A673 (cell line): ENCODE measurements at regions of chr6 and their contacts with region 1.

Region 1: DNA sequence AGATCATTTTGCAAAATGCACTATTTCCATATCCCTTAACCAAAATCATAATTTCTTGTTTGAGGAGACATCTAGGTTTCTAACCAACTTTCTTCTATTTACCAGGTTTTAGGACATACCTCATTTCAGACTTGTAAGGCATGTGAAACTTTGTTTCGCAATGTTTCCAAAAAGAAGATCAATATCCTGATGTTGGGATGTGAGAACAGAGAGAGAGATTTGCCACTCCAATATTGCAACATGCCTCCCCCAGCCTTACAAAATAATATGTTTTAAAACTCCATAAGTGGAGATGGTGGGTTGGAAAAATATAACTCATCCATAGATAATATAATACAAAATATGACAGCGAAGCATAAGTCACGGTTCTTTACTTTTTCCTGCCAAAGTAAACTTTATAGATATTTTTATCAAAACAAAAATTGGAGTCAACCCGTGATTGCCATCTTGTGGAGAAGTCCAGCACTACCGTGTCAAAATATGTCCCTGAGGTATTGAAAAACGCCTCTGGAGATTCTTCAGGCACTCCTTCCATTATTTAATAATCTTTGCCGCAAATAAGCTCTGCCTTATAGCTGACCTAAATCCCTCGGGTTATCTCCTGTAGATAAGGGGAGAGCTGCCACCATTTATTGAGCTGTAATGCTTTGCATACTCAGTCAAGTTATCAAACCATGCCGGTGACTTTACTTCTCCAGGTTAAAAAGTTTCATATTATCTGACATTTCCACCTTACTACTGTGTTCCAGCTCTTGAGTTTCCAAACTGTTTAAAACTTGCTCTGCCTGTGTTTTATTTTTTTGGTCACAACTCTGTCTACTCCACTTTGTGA is 534.2 kb downstream of the HACE1 start:
- DNase-seq: peak; percentile 69
- H3K4me3 ChIP-seq: no peak overlapping the region
- H3K27ac ChIP-seq: no peak overlapping the region
- H3K4me1 ChIP-seq: peaks cover 17% of the 10 kb centered on the region
- H3K27me3 ChIP-seq: no peaks in the 10 kb centered on the region
- CTCF ChIP-seq: peak; percentile 84

Region 2: DNA sequence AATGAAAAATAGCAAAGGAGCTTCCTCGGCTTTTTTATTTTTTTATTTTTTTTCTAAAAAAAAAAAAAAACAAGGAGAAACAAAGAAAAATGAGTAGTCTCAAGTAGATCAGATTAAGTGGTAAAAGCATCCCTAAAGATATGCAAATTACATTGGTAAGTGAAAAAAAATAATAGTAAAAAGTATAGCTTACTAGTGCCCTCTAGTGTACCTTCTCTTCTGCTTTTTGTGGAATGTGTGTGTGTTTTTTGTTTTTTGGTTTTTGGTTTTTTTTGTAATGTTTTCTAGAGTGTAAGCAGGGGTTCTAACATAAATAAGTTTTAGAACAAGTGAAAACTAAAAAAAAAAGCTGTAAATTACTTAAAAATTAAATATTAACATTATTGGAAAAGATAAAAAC is 527.8 kb before region 1 on chr6:
- CTCF ChIA-PET with region 1: interaction called, 6 read pairs
- POLR2A ChIA-PET with region 1: no interaction called
- intact Hi-C with region 1: loop called (anchors 5 kb)
- DNase-seq: peak; percentile 69
- H3K4me3 ChIP-seq: no peak overlapping the region
- H3K27ac ChIP-seq: no peak overlapping the region
- H3K4me1 ChIP-seq: no peaks in the 10 kb centered on the region
- H3K27me3 ChIP-seq: no peaks in the 10 kb centered on the region
- CTCF ChIP-seq: peak; percentile 73

Region 3: DNA sequence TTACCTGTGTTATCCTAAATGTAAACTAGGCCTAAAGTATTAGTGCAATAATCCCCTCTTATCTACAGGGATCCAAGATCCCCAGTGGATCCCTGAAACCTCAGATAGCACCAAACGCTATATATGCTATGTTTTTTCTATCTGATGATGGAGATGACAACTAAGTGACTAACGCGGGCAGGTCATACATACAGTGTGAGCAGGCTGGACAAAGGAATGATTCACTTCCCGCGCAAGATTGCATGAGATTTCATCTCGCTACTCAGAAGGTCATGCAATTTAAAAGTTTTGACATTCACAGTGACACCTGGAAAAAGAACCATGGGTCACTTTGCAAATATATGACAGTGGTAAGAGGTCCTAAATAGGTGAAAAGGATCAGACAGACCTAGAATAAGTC is 341.7 kb before region 1 on chr6:
- CTCF ChIA-PET with region 1: no interaction called
- POLR2A ChIA-PET with region 1: no interaction called
- intact Hi-C with region 1: loop called (anchors 10 kb)
- DNase-seq: no peak
- H3K4me3 ChIP-seq: no peak overlapping the region
- H3K27ac ChIP-seq: no peak overlapping the region
- H3K4me1 ChIP-seq: peaks cover 20% of the 10 kb centered on the region
- H3K27me3 ChIP-seq: no peaks in the 10 kb centered on the region
- CTCF ChIP-seq: no peak

Region 4: GRCh38 chr6:104344223-104344622 is 18.7 kb after region 1 on chr6:
- CTCF ChIA-PET with region 1: no interaction called
- POLR2A ChIA-PET with region 1: no interaction called
- intact Hi-C with region 1: no loop called
- DNase-seq: no peak
- H3K4me3 ChIP-seq: no peak overlapping the region
- H3K27ac ChIP-seq: no peak overlapping the region
- H3K4me1 ChIP-seq: no peaks in the 10 kb centered on the region
- H3K27me3 ChIP-seq: no peaks in the 10 kb centered on the region
- CTCF ChIP-seq: no peak

Region 5: GRCh38 chr6:104483225-104483834 is 157.8 kb after region 1 on chr6:
- CTCF ChIA-PET with region 1: no interaction called
- POLR2A ChIA-PET with region 1: no interaction called
- intact Hi-C with region 1: loop called (anchors 10 kb)
- DNase-seq: peak; percentile 51
- H3K4me3 ChIP-seq: no peak overlapping the region
- H3K27ac ChIP-seq: no peak overlapping the region
- H3K4me1 ChIP-seq: peaks cover 16% of the 10 kb centered on the region
- H3K27me3 ChIP-seq: no peaks in the 10 kb centered on the region
- CTCF ChIP-seq: peak; percentile 70

Region 6: DNA sequence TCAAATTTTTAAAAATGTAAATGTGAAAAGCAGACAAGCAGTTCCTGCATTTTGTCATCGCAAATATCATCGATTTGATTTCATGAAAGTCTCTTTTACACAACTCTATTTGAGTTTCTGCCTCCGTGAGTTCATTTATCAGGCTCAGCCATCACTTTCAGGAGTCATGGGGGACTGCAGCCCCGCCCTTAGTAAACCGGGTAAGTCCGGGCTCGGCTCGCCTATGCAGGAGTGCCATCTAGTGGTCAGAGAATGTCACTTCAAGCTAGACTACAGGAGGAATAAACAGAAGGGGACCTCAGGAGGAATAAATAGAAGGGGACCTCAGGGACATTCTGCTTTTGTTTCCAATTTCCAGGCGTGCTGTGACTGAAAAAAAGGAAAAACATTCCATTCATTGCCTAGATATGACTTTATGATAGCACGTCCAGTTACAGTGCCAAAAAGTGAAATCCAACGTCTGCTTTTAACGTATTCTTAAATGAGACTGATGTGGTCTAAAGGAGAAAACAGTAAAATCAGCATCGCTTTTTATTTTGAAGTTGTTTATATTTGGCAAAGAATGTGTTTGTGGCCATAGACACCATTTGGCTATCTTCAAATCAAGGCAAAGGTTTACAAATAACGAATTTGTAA is 200.2 kb after region 1 on chr6:
- CTCF ChIA-PET with region 1: no interaction called
- POLR2A ChIA-PET with region 1: no interaction called
- intact Hi-C with region 1: loop called (anchors 10 kb)
- DNase-seq: peak; percentile 91
- H3K4me3 ChIP-seq: peak overlapping the region; percentile 41
- H3K27ac ChIP-seq: no peak overlapping the region
- H3K4me1 ChIP-seq: peaks cover 7% of the 10 kb centered on the region
- H3K27me3 ChIP-seq: no peaks in the 10 kb centered on the region
- CTCF ChIP-seq: peak; percentile 93